Activated naive CD4-positive, alpha-beta T cell treated with anti-CD3 and anti-CD28 coated beads, Interleukin-2, amount 10 ng/mL, durations not matched to agents 7 days and 5 days (primary cell): ENCODE measurements at regions of chr9 and their contacts with region 1.

Region 1: DNA sequence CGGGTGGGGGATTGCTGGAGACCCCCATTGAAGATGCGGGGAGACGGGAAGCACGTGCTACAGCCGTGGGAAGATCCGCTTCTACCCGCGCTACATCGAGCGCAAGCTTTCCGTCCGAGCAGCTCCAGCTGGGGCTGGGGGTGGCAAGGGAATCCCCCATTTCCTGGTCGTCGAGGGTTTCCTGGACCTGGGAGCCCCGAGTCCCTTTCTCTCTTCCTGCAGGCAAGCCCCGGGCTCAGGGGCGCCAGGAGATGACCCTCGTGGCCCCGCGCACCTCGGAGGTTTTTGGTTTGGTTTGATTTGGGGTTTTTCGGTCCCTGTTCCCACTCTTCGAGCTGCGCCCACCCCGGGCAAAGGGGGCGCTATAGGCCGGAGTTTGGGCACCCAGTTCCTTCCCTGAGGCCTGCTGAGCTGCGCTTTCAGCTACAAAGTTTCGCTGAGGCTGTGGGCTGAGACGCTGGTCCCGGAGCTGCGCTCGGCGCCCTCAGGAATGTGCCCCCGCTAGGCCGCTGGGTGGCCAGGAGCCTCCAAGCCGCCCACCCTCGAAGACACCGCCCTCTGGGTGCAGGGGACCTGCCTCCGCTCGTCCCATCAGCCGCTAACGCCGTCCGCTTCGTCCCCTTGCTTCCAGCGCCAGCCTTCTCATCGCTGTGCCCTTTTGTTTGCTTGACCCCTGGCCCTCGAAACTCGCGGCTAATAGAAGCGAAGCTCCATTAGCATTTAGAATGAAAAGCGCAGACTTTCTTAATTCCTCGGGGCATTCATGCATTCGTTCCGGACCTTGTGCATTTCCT is 2.9 kb downstream of the NR4A3 start:
- DNase-seq: peak; percentile 81
- H3K4me3 Mint-ChIP-seq: peak overlapping the region; percentile 92
- H3K27ac Mint-ChIP-seq: no peak overlapping the region
- H3K4me1 Mint-ChIP-seq: peaks cover 63% of the 10 kb centered on the region
- H3K27me3 Mint-ChIP-seq: peaks cover 96% of the 10 kb centered on the region

Region 2: GRCh38 chr9:99430301-99430700 is 394.3 kb before region 1 on chr9:
- CTCF ChIA-PET with region 1: no interaction called
- DNase-seq: no peak
- H3K4me3 Mint-ChIP-seq: no peak overlapping the region
- H3K27ac Mint-ChIP-seq: no peak overlapping the region
- H3K4me1 Mint-ChIP-seq: peaks cover 12% of the 10 kb centered on the region
- H3K27me3 Mint-ChIP-seq: peaks cover 8% of the 10 kb centered on the region

Region 3: DNA sequence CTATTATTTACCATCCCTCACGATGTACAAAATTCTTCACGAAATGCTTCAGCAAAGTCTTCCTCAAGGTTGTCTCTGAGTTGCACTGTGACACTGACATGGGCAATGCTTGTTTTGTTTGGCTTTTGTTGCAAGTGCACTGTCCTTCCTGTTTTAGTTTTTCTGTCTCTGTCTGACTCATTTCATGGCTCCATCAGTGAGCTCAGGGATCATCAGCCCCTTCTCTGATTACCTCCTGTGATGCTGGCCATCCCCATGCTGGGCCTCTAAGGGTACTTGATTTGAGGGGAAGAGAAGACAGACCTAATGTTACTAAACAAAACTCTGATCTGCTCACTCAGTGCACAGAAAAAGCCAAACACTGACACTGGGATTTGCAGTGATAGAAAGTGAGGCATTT is 44.3 kb after region 1 on chr9:
- CTCF ChIA-PET with region 1: interaction called, 11 read pairs
- DNase-seq: no peak
- H3K4me3 Mint-ChIP-seq: no peak overlapping the region
- H3K27ac Mint-ChIP-seq: no peak overlapping the region
- H3K4me1 Mint-ChIP-seq: peaks cover 24% of the 10 kb centered on the region
- H3K27me3 Mint-ChIP-seq: peaks cover 7% of the 10 kb centered on the region

Region 4: DNA sequence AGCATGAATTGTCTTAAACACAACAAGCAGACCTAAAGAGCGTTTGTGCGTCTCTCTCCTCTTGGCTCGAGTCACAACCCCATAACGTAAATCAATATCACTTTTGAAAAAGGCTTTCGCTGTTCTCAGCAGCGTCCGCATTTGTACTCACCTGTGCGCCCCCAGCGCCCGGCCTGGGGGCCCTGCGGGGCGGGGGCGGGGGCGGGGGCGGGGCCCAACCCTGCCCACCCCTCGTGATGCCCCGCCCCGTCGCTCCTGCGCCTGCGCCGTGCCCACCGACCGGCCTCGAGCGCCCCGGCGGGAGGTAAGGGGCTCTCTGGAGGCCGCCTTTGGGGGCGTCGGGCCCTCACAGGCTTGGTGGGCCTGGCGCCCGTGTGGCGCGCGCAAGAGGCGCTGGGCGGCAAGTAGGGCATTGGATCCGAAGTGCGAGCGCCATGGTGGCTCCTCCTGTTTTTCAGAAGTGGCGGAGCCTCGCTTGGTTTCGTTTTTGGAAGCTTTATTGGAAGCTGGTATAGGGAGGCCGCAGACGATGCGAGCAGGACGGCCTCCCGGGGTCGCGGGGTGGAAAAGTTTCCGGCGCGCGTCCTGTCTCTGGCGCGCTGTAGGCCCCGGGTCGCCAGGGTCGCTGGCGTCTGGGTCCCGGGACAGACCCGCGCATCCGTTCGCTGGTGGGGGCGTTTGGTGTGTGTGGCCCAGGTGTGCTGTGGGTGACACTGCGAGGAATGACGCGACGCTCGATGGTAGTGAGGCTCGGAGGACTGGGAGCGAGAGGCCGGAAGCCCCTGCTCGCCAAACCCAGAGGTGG is 82.0 kb after region 1 on chr9 and contains the start of gene STX17:
- CTCF ChIA-PET with region 1: interaction called, 16 read pairs
- DNase-seq: peak; percentile 79
- H3K4me3 Mint-ChIP-seq: peak within 1 kb of the TSS; percentile 95
- H3K27ac Mint-ChIP-seq: peak within 1 kb of the TSS; percentile 98
- H3K4me1 Mint-ChIP-seq: peaks cover 23% of the 10 kb centered on the region
- H3K27me3 Mint-ChIP-seq: peaks cover 20% of the 10 kb centered on the region